Activated T-helper 2 cell treated with anti-CD3 and anti-CD28 coated beads, Interferon-gamma antibody, Interleukin-2, Interleukin-4, amounts not matched to agents 10 μg/mL and 5 μg/mL and 100 μg/mL, durations not matched to agents 14 hours and 24 hours and 36 hours (primary cell): ENCODE measurements at regions of chr6 and their contacts with region 1.

Region 1: DNA sequence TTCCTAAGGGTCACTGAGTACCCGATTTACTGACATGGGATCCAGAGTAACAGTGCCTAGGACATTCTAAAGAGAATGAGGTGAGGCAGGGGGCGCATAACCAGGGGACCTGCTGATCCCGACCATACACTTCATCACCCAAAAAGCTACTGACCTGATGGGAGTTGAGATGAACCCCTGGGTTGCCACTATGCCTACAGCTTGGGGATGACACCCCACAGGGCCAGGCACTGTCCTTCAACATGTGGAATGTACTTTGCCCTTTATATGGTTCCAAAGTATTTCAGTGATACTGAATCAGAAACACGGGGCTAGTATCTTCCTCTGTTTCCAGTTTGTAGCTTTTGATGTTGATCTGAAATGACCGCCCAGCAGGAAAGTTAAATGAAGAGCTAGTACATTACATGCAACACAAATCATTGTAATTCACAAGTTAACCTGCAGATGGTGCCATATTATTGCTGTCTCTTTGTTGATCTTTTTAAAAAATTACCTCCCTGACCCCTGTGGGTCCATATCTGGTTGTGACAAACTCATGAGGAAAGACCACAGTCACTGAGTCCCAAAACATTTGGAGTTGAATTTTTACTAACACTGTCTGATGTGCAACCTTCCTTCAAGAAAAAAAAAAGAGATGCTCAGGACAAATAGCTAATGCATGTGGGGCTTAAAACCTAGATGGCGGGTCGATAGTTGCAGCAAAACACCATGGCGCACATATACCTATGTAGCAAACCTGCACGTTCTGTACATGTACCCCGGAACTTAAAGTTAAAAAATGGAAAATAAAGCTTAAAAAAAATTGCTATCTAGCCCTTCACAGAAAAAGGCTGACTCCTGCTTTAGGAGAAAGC is 42.7 kb upstream of the GCNT2 start:
- DNase-seq: no peak
- H3K4me3 Mint-ChIP-seq: no peak overlapping the region
- H3K27ac Mint-ChIP-seq: no peak overlapping the region
- H3K4me1 Mint-ChIP-seq: peaks cover 3% of the 10 kb centered on the region
- H3K27me3 Mint-ChIP-seq: peaks cover 7% of the 10 kb centered on the region

Region 2: GRCh38 chr6:10800829-10801535 is 322.6 kb after region 1 on chr6:
- intact Hi-C with region 1: loop called (anchors 1 kb)
- DNase-seq: peak; percentile 47
- H3K4me3 Mint-ChIP-seq: no peak overlapping the region
- H3K27ac Mint-ChIP-seq: no peak overlapping the region
- H3K4me1 Mint-ChIP-seq: no peaks in the 10 kb centered on the region
- H3K27me3 Mint-ChIP-seq: no peaks in the 10 kb centered on the region

Region 3: DNA sequence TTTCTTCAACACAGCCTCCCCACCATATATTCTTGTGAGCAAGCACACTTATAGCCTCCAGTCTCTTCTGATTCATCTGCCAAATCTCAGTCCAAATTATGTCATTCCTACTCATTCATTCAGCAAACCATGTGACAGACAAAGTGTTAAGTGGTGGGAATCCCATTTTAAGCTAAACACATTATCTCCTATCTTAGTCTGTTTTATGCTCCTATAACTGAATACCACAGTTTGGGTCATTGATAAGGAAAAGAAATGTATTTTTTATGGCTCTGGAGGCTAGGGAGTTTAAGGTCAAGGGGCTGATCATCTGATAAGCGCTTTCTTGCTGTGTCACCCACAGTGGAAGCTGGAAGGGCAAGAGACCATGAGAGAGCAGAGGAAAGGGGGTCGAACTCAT is 591.3 kb after region 1 on chr6:
- intact Hi-C with region 1: loop called (anchors 1 kb)
- DNase-seq: no peak
- H3K4me3 Mint-ChIP-seq: no peak overlapping the region
- H3K27ac Mint-ChIP-seq: no peak overlapping the region
- H3K4me1 Mint-ChIP-seq: no peaks in the 10 kb centered on the region
- H3K27me3 Mint-ChIP-seq: peaks cover 10% of the 10 kb centered on the region